Vagina (tissue), 2 donors: ENCODE measurements at regions of chr17 and their contacts with region 1.

Region 1: GRCh38 chr17:27666831-27667560 is 36.0 kb downstream of the LGALS9 start:
- DNase-seq: no peak
- H3K4me3 ChIP-seq: no peak overlapping the region
- H3K27ac ChIP-seq: no peak overlapping the region
- H3K4me1 ChIP-seq: no peaks in the 10 kb centered on the region
- H3K27me3 ChIP-seq: no peaks in the 10 kb centered on the region
- CTCF ChIP-seq: no peak
- POLR2A ChIP-seq: no peak

Region 2: GRCh38 chr17:27506348-27507231 is 160.4 kb before region 1 on chr17:
- intact Hi-C with region 1: no loop called
- DNase-seq: no peak
- H3K4me3 ChIP-seq: no peak overlapping the region
- H3K27ac ChIP-seq: no peak overlapping the region
- H3K4me1 ChIP-seq: peaks cover 34% of the 10 kb centered on the region
- H3K27me3 ChIP-seq: no peaks in the 10 kb centered on the region
- CTCF ChIP-seq: no peak
- POLR2A ChIP-seq: no peak

Region 3: DNA sequence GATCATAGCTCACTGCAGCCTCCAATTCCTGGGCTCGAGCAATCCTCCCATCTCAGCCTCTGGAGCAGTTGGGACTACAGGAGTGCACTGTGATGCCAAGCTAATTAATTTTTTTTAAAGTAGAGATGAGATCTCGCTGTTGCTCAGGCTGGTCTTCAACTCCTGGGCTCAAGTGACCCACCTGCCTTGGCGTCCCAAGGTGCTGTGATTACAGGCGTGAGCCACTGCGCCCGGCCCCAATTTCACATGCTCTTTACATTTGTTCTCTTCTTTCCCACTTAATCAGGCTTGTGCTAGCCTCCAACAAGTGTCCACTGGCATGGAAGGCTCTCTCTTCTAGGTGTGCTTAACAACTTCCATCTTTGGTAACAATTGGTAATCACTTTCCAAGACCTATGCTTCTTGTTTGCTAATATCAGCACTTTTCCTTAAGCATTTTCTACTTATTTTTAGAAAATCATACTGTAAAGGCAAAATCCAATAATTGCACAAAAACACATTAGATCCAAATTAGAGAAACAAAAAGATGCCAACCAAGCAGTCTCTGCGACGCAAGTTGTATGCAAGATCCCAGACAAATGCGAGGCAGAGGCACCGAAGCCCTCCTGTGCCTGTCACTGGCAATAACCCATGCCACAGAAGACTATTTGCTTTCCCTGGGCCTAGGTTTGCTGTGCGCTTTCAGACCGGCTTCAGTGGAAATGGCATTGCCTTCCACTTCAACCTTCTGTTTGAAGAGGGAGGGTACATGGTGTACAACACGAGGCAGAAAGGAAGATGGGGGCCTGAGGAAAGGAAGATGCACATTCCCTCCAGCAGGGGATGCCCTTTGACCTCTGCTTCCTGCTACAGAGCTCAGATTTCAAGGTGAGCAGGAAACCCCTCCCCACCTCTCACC is 80.7 kb after region 1 on chr17:
- intact Hi-C with region 1: loop called (anchors 10 kb)
- DNase-seq: peak; percentile 32 to 74
- H3K4me3 ChIP-seq: no peak overlapping the region
- H3K27ac ChIP-seq: no peak overlapping the region
- H3K4me1 ChIP-seq: no peaks in the 10 kb centered on the region
- H3K27me3 ChIP-seq: no peaks in the 10 kb centered on the region
- CTCF ChIP-seq: no peak
- POLR2A ChIP-seq: no peak

Region 4: GRCh38 chr17:27939474-27940465 is 272.8 kb after region 1 on chr17:
- intact Hi-C with region 1: no loop called
- DNase-seq: no peak
- H3K4me3 ChIP-seq: no peak overlapping the region
- H3K27ac ChIP-seq: no peak overlapping the region
- H3K4me1 ChIP-seq: no peaks in the 10 kb centered on the region
- H3K27me3 ChIP-seq: no peaks in the 10 kb centered on the region
- CTCF ChIP-seq: no peak
- POLR2A ChIP-seq: no peak